ENCODE measurements at regions of chr5 and their contacts with region 1.

Region 1: GRCh38 chr5:170216266-170216864 is 16.4 kb upstream of the C5orf58 start:
- DNase-seq: peak; percentile 41
- ATAC-seq: peak; percentile 86
- H3K4me3 ChIP-seq: no peak overlapping the region
- H3K27ac ChIP-seq: peak overlapping the region; percentile 84; the same call in 1 of the 2 replicates
- H3K4me1 ChIP-seq: peaks cover 15% of the 10 kb centered on the region
- H3K27me3 ChIP-seq: no peaks in the 10 kb centered on the region
- CTCF ChIP-seq: peak; percentile 89

Region 2: GRCh38 chr5:169583424-169584204 is 632.8 kb before region 1 on chr5 and contains the start of gene SPDL1:
- CTCF ChIA-PET with region 1: interaction called, 10 read pairs
- POLR2A ChIA-PET with region 1: no interaction called
- in situ Hi-C with region 1: no loop called
- intact Hi-C with region 1: no loop called
- DNase-seq: peak; percentile 90
- ATAC-seq: peak; percentile 93
- H3K4me3 ChIP-seq: peak within 1 kb of the TSS; percentile 86 to 88
- H3K27ac ChIP-seq: peak within 1 kb of the TSS; percentile 97
- H3K4me1 ChIP-seq: peaks cover 38% of the 10 kb centered on the region
- H3K27me3 ChIP-seq: no peaks in the 10 kb centered on the region
- CTCF ChIP-seq: no peak
- total RNA-seq, gene SPDL1: 72.6 TPM

Region 3: DNA sequence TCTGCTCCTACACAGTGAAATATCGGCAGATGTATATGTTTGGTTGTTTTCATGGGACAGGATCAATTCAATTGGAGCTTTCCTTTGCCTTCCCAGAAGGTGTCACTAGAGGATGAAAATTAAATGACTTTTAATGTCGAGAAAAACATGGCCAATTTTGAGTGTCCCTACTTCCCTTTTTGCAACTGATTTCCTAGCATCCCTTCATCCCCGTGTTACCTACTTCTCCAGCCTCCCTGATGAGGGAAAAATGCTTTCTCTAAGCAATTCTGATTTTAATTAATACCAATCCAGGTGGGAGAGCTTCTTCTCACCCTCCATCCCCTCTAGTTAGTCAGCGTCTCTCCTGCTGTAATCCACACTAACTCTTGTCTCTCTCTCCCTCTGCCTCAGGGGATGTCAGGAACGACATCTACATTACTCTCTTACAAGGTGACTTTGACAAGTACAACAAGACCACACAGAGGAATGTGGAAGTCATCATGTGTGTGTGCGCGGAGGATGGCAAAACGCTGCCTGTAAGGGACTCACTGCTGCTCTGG is 514.4 kb before region 1 on chr5:
- CTCF ChIA-PET with region 1: interaction called, 6 read pairs
- POLR2A ChIA-PET with region 1: no interaction called
- in situ Hi-C with region 1: no loop called
- intact Hi-C with region 1: loop called (anchors 5 kb)
- DNase-seq: no peak
- ATAC-seq: peak; percentile 79
- H3K4me3 ChIP-seq: no peak overlapping the region
- H3K27ac ChIP-seq: peak overlapping the region; percentile 52; the same call in 1 of the 2 replicates
- H3K4me1 ChIP-seq: peaks cover 13% of the 10 kb centered on the region
- H3K27me3 ChIP-seq: no peaks in the 10 kb centered on the region
- CTCF ChIP-seq: peak; percentile 73

Region 4: GRCh38 chr5:169980418-169981053 is 235.8 kb before region 1 on chr5 and contains the start of gene INSYN2B:
- CTCF ChIA-PET with region 1: no interaction called
- POLR2A ChIA-PET with region 1: no interaction called
- in situ Hi-C with region 1: no loop called
- intact Hi-C with region 1: loop called (anchors 2 kb)
- DNase-seq: peak; percentile 84
- ATAC-seq: peak; percentile 96
- H3K4me3 ChIP-seq: peak within 1 kb of the TSS; percentile 39 to 49
- H3K27ac ChIP-seq: peak within 1 kb of the TSS; percentile 67; the same call in 1 of the 2 replicates
- H3K4me1 ChIP-seq: peaks cover 12% of the 10 kb centered on the region
- H3K27me3 ChIP-seq: no peaks in the 10 kb centered on the region; the same call in 1 of the 2 replicates
- CTCF ChIP-seq: peak; percentile 90
- total RNA-seq, gene INSYN2B: 0.28 TPM

Region 5: GRCh38 chr5:170100066-170100943 is 116.1 kb before region 1 on chr5:
- CTCF ChIA-PET with region 1: interaction called, 17 read pairs
- POLR2A ChIA-PET with region 1: no interaction called
- in situ Hi-C with region 1: no loop called
- intact Hi-C with region 1: loop called (anchors 1 kb)
- DNase-seq: peak; percentile 36
- ATAC-seq: peak; percentile 88
- H3K4me3 ChIP-seq: no peak overlapping the region
- H3K27ac ChIP-seq: peak overlapping the region; percentile 91
- H3K4me1 ChIP-seq: peaks cover 33% of the 10 kb centered on the region
- H3K27me3 ChIP-seq: no peaks in the 10 kb centered on the region
- CTCF ChIP-seq: peak; percentile 79